Calu3 (cell line): ENCODE measurements at regions of chr10 and their contacts with region 1.

Region 1: GRCh38 chr10:103917326-103918052 is 495 bp downstream of the STN1 start:
- DNase-seq: peak; percentile 29
- H3K4me3 Mint-ChIP-seq: peak overlapping the region; percentile 84
- H3K27ac Mint-ChIP-seq: peak overlapping the region; percentile 86
- H3K4me1 Mint-ChIP-seq: peaks cover 7% of the 10 kb centered on the region
- H3K27me3 Mint-ChIP-seq: no peaks in the 10 kb centered on the region
- CTCF ChIP-seq: no peak

Region 2: GRCh38 chr10:103884681-103885139 is 32.8 kb before region 1 on chr10:
- CTCF ChIA-PET with region 1: no interaction called
- intact Hi-C with region 1: no loop called
- DNase-seq: peak; percentile 52
- H3K4me3 Mint-ChIP-seq: no peak overlapping the region
- H3K27ac Mint-ChIP-seq: no peak overlapping the region
- H3K4me1 Mint-ChIP-seq: peaks cover 17% of the 10 kb centered on the region
- H3K27me3 Mint-ChIP-seq: no peaks in the 10 kb centered on the region
- CTCF ChIP-seq: peak; percentile 57

Region 3: GRCh38 chr10:103967448-103968071 is 50.1 kb after region 1 on chr10:
- CTCF ChIA-PET with region 1: no interaction called
- intact Hi-C with region 1: loop called (anchors 2 kb)
- DNase-seq: no peak
- H3K4me3 Mint-ChIP-seq: peak overlapping the region; percentile 93
- H3K27ac Mint-ChIP-seq: peak overlapping the region; percentile 86
- H3K4me1 Mint-ChIP-seq: peaks cover 6% of the 10 kb centered on the region
- H3K27me3 Mint-ChIP-seq: no peaks in the 10 kb centered on the region
- CTCF ChIP-seq: no peak

Region 4: DNA sequence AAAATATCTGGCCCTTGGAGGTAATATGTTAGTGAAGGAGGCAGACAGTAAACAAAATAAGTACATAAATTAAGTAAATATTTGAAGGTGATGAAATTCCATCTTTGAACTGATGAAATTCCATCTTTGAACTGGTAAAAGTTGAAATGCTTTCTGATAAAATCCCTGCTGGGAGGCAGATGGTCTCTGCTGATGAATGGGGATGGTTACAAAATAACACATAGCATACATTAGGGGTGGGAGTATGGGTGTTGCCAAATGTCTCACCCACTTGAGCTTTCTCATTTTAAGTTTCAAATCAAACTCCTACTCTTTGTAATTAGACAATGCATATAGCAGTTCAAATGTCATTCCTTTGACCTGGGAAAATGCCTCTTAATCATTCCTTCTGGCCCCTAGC is 646.1 kb after region 1 on chr10:
- CTCF ChIA-PET with region 1: no interaction called
- intact Hi-C with region 1: no loop called
- DNase-seq: no peak
- H3K4me3 Mint-ChIP-seq: no peak overlapping the region
- H3K27ac Mint-ChIP-seq: no peak overlapping the region
- H3K4me1 Mint-ChIP-seq: no peaks in the 10 kb centered on the region
- H3K27me3 Mint-ChIP-seq: peaks cover 14% of the 10 kb centered on the region
- CTCF ChIP-seq: no peak